ENCODE measurements at regions of chr4 and their contacts with region 1.

Region 1: DNA sequence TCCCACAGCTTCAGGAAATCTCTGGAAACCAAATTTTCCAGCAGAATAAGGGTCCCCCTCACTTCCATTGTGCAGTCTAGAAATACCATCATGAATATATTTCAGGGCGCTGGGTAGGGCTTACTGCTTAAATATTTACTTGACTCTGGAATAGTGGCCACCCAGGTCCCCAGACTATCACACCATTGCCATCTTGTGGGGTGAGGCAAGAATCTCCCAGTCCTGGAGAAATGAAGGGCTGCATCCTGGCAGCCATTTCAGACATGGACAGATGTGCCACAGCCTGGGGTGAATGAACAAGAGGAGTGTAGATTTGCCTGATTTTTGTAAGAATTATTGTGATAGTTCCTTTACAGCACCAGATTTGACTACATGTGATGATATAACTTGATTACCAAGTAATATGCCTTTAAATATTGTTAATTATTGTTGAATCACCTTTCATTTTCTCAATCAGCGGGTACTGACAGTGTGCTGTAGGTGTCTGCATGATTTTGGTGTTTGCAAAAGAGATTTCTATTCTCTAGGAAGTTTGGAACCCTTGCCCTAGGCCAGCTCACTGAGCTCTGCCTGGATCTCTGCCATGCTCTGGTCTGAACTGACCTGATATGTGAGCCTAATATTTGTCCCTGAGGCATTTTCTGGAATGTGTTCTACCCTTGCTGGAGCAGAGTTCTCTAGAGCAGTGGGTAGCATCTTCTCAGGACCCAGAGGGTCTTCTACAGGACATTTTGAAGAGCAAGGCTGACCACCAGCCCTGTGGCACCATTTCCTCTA is 183.4 kb downstream of the KIT start:
- DNase-seq: peak; percentile 17
- ATAC-seq: peak; percentile 33 to 74

Region 2: DNA sequence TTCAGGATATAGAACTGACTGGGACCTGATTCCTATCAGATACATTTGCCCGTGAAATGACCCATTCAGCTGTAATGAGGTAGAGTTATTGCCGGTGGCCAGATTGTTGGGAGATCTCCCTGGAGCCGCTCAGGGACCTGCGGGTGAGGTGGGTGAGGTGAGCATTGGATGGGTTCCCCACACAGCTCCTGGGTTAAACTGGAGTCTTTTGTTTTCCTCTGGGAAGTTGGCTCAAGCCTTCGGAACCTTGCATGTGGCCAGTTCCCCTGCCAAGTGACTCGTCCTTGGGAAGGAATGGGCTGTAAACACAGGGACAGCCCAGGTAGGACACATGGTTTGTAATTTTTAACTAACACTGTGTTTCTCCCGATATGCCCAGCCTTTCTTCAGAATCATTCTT is 215.1 kb before region 1 on chr4:
- intact Hi-C with region 1: no loop called
- DNase-seq: no peak
- ATAC-seq: no peak

Region 3: GRCh38 chr4:54675721-54676461 is 165.3 kb before region 1 on chr4:
- intact Hi-C with region 1: loop called in 1 of 2 experiments (anchors 10 kb)
- DNase-seq: no peak
- ATAC-seq: no peak

Measured in left cardiac atrium (tissue), 4 donors.